Transverse colon (tissue), 4 donors: ENCODE measurements at regions of chr3 and their contacts with region 1.

Region 1: DNA sequence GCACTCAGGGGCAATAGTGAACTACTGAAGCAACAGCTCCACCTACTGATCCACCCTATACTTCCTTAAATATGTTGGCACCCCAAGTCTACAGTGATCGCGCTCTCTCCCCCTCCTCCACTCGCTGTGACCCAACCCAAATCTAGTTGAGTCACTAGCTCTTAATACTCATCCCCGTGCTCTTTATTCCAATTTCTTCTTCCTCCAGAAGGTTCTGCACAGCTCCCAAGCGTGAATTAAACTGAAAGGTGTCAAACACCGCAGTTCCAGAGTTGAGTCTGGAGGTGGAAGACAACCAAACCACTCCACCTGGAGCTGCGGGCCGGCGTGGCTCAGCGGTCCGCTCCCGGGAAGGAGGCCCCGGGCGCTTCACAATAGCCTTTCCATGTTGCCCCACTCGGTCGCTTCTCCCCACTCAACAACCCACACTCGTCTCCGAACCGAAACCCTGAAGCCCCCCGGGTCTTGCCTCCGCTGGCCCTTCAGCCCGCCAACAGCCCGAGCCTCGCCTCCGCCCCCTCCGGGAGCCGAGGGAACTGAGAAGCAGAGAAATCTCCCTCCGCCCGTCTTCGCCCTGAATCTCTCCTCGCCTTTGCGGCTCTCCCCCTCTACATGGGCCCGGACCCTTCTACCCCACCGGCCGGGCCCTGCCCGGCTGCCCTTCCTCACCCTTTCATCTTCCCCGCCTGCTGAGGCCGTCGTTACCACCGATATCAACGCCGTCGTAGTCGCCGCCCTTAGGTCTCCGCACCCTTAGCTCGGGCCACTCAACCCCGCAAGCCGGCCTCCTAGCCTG is 578 bp downstream of the NAA50 start:
- DNase-seq: peak; percentile 81
- H3K4me3 ChIP-seq: peak overlapping the region; percentile 75 to 89 (median 83)
- H3K27ac ChIP-seq: peak overlapping the region; percentile 95 to 99 (median 97)
- H3K4me1 ChIP-seq: peaks cover 22 to 63% (median 42%) of the 10 kb centered on the region in 4 donors
- H3K27me3 ChIP-seq: no peaks in the 10 kb centered on the region
- CTCF ChIP-seq: peak; percentile 37 to 72 (median 59)
- EP300 ChIP-seq: no peak
- POLR2A ChIP-seq: peak; percentile 36

Region 2: DNA sequence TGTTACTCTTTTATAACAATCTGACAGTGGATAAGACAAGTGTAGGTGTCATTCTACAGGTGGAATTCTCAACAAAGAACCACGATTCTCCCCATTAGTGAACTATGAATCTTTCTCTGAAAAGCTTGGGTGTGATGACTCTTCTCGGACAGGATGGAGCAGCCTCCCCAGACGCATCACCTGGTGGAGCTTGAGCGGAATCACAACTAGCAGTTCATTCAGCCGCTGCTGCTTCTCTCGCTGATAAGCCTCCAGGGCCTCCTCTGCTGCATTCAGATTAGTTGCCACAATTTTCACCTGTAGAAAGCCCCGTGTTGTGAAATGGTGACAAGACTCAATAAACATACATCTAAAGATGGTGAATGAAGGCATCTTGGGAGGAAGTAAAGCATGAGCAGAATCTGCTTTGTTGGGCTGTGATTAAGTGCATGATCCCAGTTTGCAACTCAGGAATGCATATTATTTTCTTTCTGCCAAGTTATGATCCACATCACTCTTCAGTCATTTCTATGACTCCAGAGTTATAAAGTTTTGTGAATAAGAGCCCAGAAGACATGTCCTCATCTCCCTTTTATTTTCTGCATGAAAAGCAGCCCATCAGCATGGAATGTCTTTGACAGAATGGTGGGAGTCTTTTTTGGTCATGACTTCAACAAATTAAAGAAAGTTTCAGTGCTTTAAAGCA is 440.5 kb before region 1 on chr3:
- in situ Hi-C with region 1: no loop called
- intact Hi-C with region 1: loop called (anchors 10 kb)
- DNase-seq: no peak
- H3K4me3 ChIP-seq: no peak overlapping the region
- H3K27ac ChIP-seq: no peak overlapping the region
- H3K4me1 ChIP-seq: no peaks in the 10 kb centered on the region
- H3K27me3 ChIP-seq: no peaks in the 10 kb centered on the region
- CTCF ChIP-seq: no peak
- EP300 ChIP-seq: no peak
- POLR2A ChIP-seq: no peak

Region 3: DNA sequence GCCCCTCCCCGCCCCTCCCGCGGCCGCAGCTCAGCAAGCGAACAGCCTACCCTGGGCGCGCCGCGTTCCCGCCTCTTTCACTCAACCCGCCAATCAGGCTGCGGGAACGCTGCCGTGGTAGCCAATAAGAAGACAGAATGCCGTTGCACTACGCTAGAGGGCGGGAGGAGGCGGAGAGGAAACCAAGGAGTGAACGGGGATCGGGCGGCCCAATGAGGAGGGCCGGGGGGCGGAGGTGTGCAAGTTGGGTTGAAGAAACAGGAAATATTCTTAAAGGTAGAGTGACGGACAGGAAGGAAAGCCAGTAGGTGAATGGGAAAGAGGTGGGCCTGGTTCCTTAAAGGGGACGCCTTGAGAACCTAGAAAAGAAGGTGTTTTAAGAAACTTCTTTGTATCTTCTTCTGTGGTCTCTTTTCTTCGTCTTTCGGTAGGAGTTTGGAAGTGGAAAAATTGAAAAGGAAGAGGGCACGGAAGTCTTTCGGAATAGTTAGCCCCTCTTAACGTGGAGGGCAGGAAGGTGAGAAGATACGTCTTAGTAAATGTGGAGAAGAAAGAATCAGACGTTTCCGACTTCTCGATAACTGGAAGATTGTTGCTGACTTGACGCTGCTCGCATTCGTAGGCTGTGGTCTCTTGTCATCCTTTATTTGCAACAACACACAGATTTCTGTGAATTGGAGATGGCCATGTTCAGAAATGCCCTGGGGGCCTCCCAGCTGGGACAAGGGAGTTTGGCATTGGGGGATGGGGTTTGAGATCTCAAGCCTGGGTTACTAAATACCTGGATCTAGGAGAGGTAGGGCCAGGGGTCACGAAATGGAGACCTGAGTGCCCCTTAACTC is 48.6 kb before region 1 on chr3:
- in situ Hi-C with region 1: loop called in 1 of 4 experiments (anchors 10 kb)
- intact Hi-C with region 1: loop called (anchors 2 kb)
- DNase-seq: peak; percentile 99
- H3K4me3 ChIP-seq: peak overlapping the region; percentile 96 to 100 (median 98)
- H3K27ac ChIP-seq: peak overlapping the region; percentile 99 to 100 (median 100)
- H3K4me1 ChIP-seq: peaks cover 16 to 43% (median 23%) of the 10 kb centered on the region in 4 donors
- H3K27me3 ChIP-seq: no peaks in the 10 kb centered on the region
- CTCF ChIP-seq: peak in 3 of 5 experiments; percentile 11 to 47 (median 31)
- EP300 ChIP-seq: no peak
- POLR2A ChIP-seq: peak; percentile 57

Region 4: GRCh38 chr3:114056130-114057010 is 310.9 kb after region 1 on chr3 and contains the starts of genes CCDC191 and QTRT2:
- in situ Hi-C with region 1: loop called in 1 of 4 experiments (anchors 25 kb)
- intact Hi-C with region 1: no loop called
- DNase-seq: peak; percentile 99
- H3K4me3 ChIP-seq: peak within 1 kb of the TSS; percentile 59 to 72 (median 66)
- H3K27ac ChIP-seq: peak within 1 kb of the TSS; percentile 76 to 90 (median 87)
- H3K4me1 ChIP-seq: peaks cover 6 to 26% (median 13%) of the 10 kb centered on the region in 4 donors
- H3K27me3 ChIP-seq: no peaks in the 10 kb centered on the region
- CTCF ChIP-seq: no peak
- EP300 ChIP-seq: no peak
- POLR2A ChIP-seq: peak; percentile 24
- total RNA-seq, gene CCDC191: 5.7 to 27.7 (median 11.7) TPM
- total RNA-seq, gene QTRT2: 7.2 to 18.3 (median 14.7) TPM